Naive thymus-derived CD4-positive, alpha-beta T cell (primary cell): ENCODE measurements at regions of chr2 and their contacts with region 1.

Region 1: GRCh38 chr2:47862949-47863348 is 43.3 kb downstream of the FBXO11 start:
- DNase-seq: no peak
- ATAC-seq: no peak
- H3K4me3 ChIP-seq: no peak overlapping the region
- H3K4me3 Mint-ChIP-seq: no peak overlapping the region
- H3K27ac ChIP-seq: no peak overlapping the region
- H3K27ac Mint-ChIP-seq: peak overlapping the region in 6 of 9 donors; percentile 1 to 61 (median 26)
- H3K4me1 ChIP-seq: peaks cover 0 to 15% of the 10 kb centered on the region in 2 donors
- H3K4me1 Mint-ChIP-seq: peaks cover 25 to 87% (median 76%) of the 10 kb centered on the region in 7 donors
- H3K27me3 ChIP-seq: no peaks in the 10 kb centered on the region
- H3K27me3 Mint-ChIP-seq: no peaks in the 10 kb centered on the region

Region 2: DNA sequence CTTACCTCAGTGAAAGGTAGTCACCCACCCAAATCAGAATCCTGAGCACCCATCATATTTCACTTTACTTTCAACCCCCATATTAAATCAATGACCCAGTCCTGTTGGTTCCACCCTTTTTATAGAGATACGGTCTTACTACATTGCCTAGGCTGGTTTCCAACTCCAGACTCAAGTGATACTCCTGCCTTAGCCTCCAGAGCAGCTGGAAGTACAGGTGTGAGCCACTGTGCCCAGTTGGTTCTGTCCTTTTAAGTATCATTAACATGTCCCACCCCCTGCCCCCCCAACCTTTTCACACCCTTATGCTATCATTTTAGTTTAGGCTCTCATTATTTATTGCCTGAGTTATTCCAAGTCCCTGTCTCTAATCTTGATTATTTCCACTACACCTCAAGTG is 51.3 kb before region 1 on chr2:
- CTCF ChIA-PET with region 1: no interaction called
- POLR2A ChIA-PET with region 1: no interaction called
- intact Hi-C with region 1: no loop called
- DNase-seq: no peak
- ATAC-seq: no peak
- H3K4me3 ChIP-seq: no peak overlapping the region
- H3K4me3 Mint-ChIP-seq: no peak overlapping the region
- H3K27ac ChIP-seq: no peak overlapping the region
- H3K27ac Mint-ChIP-seq: peak overlapping the region in 8 of 9 donors; percentile 28 to 78 (median 51)
- H3K4me1 ChIP-seq: no peaks in the 10 kb centered on the region
- H3K4me1 Mint-ChIP-seq: peaks cover 0 to 14% (median 7%) of the 10 kb centered on the region in 7 donors
- H3K27me3 ChIP-seq: no peaks in the 10 kb centered on the region
- H3K27me3 Mint-ChIP-seq: no peaks in the 10 kb centered on the region

Region 3: GRCh38 chr2:48016225-48017019 is 153.5 kb after region 1 on chr2:
- CTCF ChIA-PET with region 1: interaction called, 3 read pairs
- POLR2A ChIA-PET with region 1: no interaction called
- intact Hi-C with region 1: loop called in 1 of 2 experiments (anchors 1 kb)
- DNase-seq: peak in 4 of 9 donors; percentile 1 to 19 (median 1)
- ATAC-seq: no peak
- H3K4me3 ChIP-seq: no peak overlapping the region
- H3K4me3 Mint-ChIP-seq: no peak overlapping the region
- H3K27ac ChIP-seq: no peak overlapping the region
- H3K27ac Mint-ChIP-seq: no peak overlapping the region
- H3K4me1 ChIP-seq: no peaks in the 10 kb centered on the region
- H3K4me1 Mint-ChIP-seq: no peaks in the 10 kb centered on the region
- H3K27me3 ChIP-seq: no peaks in the 10 kb centered on the region
- H3K27me3 Mint-ChIP-seq: peaks cover 5 to 17% (median 7%) of the 10 kb centered on the region in 5 donors